Astrocyte of the cerebellum (primary cell): ENCODE measurements at regions of chr20 and their contacts with region 1.

Region 1: DNA sequence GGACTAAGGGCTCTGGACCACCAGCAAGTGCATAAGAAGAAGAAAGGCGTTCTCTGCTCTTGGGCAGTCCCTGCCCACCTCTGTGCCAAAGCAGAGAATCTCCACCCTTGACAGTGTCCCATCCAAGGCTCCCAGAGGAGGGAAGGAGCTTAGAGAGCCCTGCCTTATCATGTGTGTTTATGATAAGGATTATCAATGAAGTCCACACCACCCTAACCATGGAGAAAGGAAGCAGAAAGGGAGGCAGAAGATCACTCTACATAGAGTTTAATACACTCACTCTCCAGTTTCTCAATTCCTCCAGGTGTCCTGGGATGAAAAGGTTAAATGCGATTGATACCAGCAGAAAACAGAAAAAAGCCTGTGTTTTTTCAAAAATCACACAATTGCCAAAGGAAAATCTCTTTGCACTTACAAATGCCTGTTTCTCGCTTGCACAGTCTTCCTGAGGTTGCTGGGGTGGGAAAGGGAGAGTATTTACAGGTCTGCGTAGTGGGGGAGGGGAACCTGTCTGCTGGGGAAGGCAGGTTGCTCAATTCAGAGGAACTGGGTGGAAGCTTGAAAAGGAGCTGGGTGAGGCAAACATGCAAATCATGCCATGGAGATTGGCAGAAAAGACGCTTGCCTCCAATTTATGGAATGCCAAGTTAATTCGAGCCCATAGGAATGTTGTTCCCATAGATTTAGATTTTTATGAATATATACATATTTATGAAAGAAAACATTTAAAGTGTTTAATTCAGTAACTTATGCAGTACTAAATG is 104.0 kb downstream of the EYA2 start:
- DNase-seq: no peak
- H3K4me3 ChIP-seq: no peak overlapping the region
- CTCF ChIP-seq: no peak

Region 2: DNA sequence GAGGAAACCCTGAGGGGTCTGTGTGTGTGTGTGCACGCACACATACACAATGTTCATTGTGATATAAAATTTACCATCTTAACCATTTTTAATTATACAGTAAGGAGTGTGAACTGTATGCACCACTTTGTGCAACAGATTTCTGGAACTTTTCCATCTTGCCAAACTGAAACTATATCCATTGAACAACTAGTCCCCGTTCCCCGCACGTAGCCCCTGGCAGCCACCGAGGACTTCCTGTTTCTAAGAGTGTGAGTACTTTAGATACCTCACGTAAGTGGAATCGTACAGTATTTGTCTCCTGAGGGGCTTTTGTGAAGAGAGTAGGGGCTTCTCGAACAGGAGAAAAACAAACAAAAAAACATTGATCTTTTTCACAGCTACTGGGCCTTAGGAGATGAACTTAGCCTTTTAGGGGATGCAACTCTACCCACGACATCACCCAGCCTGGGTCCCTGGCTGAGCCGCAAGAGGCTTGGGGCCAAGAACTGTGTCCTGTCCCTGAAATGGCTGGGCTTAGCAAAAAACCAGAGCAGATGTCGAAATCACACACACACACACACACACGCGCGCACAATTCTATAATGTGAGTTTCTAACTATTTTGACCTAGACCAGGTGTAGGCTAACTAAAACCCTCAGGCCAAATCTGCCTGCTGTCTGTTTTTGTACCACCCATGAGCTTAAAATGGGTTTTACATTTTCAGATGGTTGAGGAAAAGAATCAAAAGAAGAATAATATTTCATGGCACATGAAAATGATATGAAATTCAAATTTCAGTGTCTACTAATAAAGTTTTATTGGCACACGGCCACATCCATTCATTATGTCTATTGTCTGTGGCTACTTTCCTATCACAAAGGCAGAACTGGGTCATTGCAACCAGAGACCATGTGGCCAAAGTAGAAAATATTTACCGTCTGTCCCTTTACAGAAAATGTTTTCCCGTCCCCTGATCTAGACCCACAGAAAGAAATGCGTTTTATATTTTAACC is 40.2 kb after region 1 on chr20:
- in situ Hi-C with region 1: no loop called
- DNase-seq: no peak
- H3K4me3 ChIP-seq: no peak overlapping the region
- CTCF ChIP-seq: no peak

Region 3: DNA sequence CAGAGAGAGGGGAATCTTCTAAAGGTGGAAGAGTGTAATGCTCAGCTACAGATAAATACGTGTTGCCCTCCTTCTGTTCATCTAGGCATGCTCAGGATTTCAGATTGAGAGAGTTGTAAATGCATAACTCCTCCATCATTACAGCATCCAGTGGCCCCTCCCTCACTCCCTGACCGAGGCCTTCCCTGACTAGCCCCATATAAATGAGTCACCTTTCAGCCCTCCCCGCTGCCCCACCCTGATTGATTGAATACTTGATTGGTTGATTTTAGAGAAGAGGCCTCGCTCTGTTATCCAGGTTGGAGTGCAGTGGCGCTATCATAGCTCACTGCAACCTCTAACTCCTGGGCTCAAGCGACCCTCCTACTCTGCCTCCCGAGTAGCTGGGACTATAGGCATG is 89.7 kb after region 1 on chr20:
- in situ Hi-C with region 1: loop called (anchors 5 kb)
- DNase-seq: no peak
- H3K4me3 ChIP-seq: no peak overlapping the region
- CTCF ChIP-seq: no peak